ENCODE measurements at regions of chr15 and their contacts with region 1.

Region 1: DNA sequence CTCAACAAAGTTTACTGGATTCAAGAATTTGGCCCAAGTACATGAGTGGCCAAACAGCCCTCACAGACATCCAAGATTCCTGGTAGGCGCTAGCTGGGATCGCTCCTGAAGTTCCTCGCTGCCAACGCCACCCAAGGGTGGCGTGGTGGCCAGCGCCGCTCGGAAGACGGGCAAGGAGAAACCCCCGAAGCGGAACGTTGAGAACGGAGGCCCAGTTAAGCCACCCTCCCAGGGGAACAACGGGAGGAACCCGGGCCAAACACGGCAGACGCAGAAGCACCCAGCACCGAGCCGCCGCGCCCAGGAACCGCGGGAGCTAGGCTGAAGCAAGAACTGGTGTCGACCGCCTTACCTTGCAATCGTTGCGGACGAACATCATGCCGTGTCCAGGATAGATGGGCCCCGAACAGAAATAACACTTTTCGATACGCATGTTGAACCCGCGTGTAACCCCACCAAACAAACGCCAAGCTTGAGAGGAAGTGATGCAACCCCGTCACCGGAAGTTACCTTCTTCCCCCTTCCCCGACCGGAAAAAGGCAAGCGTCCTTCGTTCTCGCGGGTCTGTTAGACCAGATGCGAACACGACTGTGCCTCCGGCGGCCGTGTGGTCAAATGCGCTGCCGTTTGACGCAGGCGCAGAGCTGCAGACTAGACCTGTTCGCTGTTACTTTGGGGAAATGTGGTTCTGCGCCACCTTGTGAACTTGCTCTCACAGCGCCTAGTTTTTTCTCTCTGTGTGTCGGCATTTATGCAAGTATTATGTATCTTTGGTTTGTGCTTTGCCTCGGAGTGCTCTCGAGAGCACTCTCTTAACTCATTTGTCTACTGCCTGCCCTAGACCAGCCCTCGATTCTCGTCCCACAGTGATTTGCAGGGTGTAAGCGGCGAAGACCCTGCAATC is at the start of gene RSL24D1:
- DNase-seq: peak; percentile 99
- H3K4me3 Mint-ChIP-seq: no peak within 1 kb of the TSS
- H3K27ac Mint-ChIP-seq: no peak within 1 kb of the TSS
- H3K4me1 Mint-ChIP-seq: peaks cover 14% of the 10 kb centered on the region
- H3K27me3 Mint-ChIP-seq: no peaks in the 10 kb centered on the region
- total RNA-seq, gene RSL24D1: 121 TPM in 2 replicates

Region 2: GRCh38 chr15:55318588-55319494 is 122.1 kb after region 1 on chr15 and contains the starts of genes PIGB and PIGBOS1:
- intact Hi-C with region 1: loop called (anchors 1 kb)
- DNase-seq: peak; percentile 95
- H3K4me3 Mint-ChIP-seq: peak within 1 kb of the TSS; percentile 97
- H3K27ac Mint-ChIP-seq: peak within 1 kb of the TSS; percentile 99
- H3K4me1 Mint-ChIP-seq: peaks cover 39% of the 10 kb centered on the region
- H3K27me3 Mint-ChIP-seq: no peaks in the 10 kb centered on the region
- total RNA-seq, gene PIGB: 13.3 and 18.6 TPM in 2 replicates
- total RNA-seq, gene PIGBOS1: 9.7 and 10.3 TPM in 2 replicates

Region 3: GRCh38 chr15:55434989-55435825 is 238.5 kb after region 1 on chr15:
- intact Hi-C with region 1: loop called (anchors 5 kb)
- DNase-seq: peak; percentile 77
- H3K4me3 Mint-ChIP-seq: no peak overlapping the region
- H3K27ac Mint-ChIP-seq: no peak overlapping the region
- H3K4me1 Mint-ChIP-seq: peaks cover 4% of the 10 kb centered on the region
- H3K27me3 Mint-ChIP-seq: peaks cover 5% of the 10 kb centered on the region